PC-9 (cell line): ENCODE measurements at regions of chr2 and their contacts with region 1.

Region 1: GRCh38 chr2:234705108-234705507 is 208.2 kb upstream of the ARL4C start:
- DNase-seq: no peak
- H3K4me3 ChIP-seq: no peak overlapping the region
- H3K27ac ChIP-seq: no peak overlapping the region
- H3K4me1 ChIP-seq: peaks cover 14% of the 10 kb centered on the region
- H3K27me3 ChIP-seq: no peaks in the 10 kb centered on the region
- CTCF ChIP-seq: no peak

Region 2: DNA sequence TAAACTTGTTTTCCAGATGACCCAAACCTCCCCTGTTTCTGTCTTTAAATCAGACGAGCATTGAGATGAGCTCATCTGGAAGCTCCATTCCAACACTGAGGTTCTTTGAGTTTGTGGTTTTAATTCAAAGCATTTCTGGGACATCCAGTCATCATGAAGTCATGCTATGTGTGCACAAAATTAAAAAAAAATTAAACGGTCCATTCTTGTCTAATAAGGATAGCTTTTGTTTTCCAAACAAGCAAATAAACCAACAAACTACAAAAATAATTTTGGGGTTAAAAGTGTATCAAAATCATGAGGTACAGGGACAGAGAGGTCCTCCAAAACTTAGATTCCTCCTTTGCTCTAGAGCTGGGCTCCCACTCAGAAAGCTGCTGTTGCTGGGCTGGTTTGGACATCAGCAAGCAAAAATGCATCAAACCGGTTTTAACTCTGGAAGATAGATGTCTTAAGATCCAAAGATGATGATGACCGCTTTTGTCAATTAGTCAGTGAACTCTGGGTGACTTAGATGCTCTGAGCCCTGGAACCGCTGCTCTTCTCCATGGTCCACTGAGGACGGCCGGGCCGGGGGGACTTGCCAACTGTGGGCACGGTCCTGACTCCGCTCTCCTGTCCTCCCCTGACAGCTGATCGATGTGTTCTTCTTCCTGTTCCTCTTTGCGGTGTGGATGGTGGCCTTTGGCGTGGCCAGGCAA is 722.5 kb before region 1 on chr2:
- CTCF ChIA-PET with region 1: interaction called, 11 read pairs
- POLR2A ChIA-PET with region 1: no interaction called
- intact Hi-C with region 1: no loop called
- DNase-seq: peak; percentile 56 to 85
- H3K4me3 ChIP-seq: no peak overlapping the region
- H3K27ac ChIP-seq: peak overlapping the region; percentile 12; the same call in 1 of the 2 replicates
- H3K4me1 ChIP-seq: peaks cover 36% of the 10 kb centered on the region
- H3K27me3 ChIP-seq: no peaks in the 10 kb centered on the region
- CTCF ChIP-seq: no peak

Region 3: GRCh38 chr2:234032279-234032856 is 672.7 kb before region 1 on chr2:
- CTCF ChIA-PET with region 1: no interaction called
- POLR2A ChIA-PET with region 1: no interaction called
- intact Hi-C with region 1: no loop called
- DNase-seq: no peak
- H3K4me3 ChIP-seq: no peak overlapping the region
- H3K27ac ChIP-seq: no peak overlapping the region
- H3K4me1 ChIP-seq: no peaks in the 10 kb centered on the region
- H3K27me3 ChIP-seq: no peaks in the 10 kb centered on the region
- CTCF ChIP-seq: no peak

Region 4: DNA sequence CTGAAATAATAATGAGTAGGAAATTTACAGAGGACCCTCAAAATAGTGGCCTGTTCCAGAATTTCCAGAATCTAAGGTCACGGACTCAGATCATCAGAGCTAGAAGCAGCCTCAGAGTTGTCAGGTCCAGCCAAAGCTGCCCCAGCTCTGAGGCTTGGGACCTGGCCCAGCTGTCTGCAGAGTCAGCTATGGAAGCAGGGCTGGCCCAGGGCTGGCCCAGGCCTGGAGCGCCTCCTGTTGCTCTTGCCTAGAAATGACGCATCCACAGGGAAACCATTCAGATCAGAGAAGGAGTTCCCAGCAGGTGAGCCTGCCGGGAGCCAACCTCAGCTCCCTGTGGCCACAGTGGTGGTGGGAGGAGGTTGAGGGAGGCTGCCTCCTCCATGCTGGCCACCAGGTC is 101.5 kb before region 1 on chr2:
- CTCF ChIA-PET with region 1: no interaction called
- POLR2A ChIA-PET with region 1: interaction called, 16 read pairs
- intact Hi-C with region 1: no loop called
- DNase-seq: no peak
- H3K4me3 ChIP-seq: no peak overlapping the region
- H3K27ac ChIP-seq: no peak overlapping the region
- H3K4me1 ChIP-seq: no peaks in the 10 kb centered on the region
- H3K27me3 ChIP-seq: no peaks in the 10 kb centered on the region
- CTCF ChIP-seq: no peak

Region 5: DNA sequence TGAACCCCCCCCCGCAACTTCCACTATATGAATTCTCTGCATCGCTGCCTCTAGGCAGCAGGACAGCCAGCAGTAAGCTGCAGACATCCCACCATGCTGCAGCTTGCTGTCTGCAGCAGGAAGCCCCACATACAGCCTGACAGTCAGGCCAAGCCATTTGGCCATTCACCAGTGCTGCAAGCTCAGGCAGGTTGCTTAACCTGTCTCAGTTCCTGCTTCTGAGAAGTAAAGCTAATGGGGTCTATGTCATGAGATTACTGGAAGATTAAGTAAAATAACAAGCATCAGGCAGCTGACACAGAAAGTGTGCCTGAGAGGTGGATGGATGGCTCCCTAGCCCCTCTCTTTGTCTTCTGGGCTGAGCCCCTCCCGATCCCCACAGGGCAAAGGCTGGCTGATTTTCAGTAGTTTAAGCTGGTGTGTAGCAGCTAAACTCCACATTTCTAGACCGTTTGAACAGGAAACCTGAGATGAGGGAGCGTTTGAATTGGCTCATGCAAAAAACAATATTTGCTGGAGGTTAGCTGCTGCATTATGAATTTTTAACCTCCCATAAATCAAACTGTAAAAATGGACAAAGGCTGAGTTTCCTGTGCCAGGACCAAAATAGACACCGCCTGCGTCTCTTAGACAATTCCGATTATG is 14.4 kb before region 1 on chr2:
- CTCF ChIA-PET with region 1: no interaction called
- POLR2A ChIA-PET with region 1: no interaction called
- intact Hi-C with region 1: no loop called
- DNase-seq: peak in 1 of 2 experiments; percentile 43
- H3K4me3 ChIP-seq: no peak overlapping the region
- H3K27ac ChIP-seq: no peak overlapping the region
- H3K4me1 ChIP-seq: peaks cover 59% of the 10 kb centered on the region
- H3K27me3 ChIP-seq: no peaks in the 10 kb centered on the region
- CTCF ChIP-seq: no peak